Panc1 (cell line): ENCODE measurements at regions of chr2 and their contacts with region 1.

Region 1: DNA sequence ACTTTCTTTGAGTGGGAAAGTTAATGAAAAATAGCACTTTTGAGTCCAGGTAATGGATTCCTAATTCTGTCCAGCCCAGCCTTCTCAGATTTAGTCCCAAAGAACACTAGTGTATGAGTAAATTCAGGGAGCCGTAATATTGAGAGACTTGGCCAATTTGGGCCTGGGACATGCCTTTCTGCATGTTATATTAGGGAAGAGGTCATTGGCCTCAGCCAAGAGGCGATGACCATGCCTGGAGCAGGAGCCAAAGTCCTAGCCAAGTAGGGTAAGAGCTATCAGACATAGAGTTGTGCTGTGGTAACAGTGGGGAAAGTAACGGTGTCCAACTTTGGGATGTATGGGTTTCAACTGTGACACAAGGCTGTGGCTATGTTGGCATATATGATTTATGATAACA is 336.5 kb upstream of the ZNF804A start:
- DNase-seq: no peak
- ATAC-seq: no peak
- H3K4me3 ChIP-seq: no peak overlapping the region
- H3K27ac ChIP-seq: no peak overlapping the region
- H3K4me1 ChIP-seq: no peaks in the 10 kb centered on the region
- H3K27me3 ChIP-seq: no peaks in the 10 kb centered on the region
- CTCF ChIP-seq: no peak

Region 2: DNA sequence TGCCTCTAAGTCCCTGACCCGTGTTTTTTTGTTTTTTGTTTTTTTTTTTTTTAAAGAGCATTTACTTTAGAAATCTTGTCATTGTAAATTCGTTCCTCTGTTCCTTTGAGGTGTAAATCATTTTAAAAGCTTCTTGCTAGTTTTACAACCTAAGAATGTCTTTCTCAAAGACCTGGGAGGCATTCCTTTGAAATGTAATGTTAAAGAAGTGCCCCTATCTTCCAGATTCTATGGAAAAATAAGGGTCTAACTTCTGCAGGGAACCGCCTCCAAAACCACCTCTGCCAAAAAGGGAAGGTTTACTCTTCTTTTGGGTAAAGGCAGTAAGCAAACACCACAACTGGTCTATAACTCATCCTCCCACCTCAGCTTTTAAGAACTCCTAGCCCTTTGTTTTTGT is 77.0 kb after region 1 on chr2:
- CTCF ChIA-PET with region 1: interaction called, 10 read pairs
- POLR2A ChIA-PET with region 1: no interaction called
- in situ Hi-C with region 1: no loop called
- intact Hi-C with region 1: no loop called
- DNase-seq: no peak
- ATAC-seq: no peak
- H3K4me3 ChIP-seq: no peak overlapping the region
- H3K27ac ChIP-seq: no peak overlapping the region
- H3K4me1 ChIP-seq: no peaks in the 10 kb centered on the region
- H3K27me3 ChIP-seq: no peaks in the 10 kb centered on the region
- CTCF ChIP-seq: no peak